ENCODE measurements at regions of chr9 and their contacts with region 1.

Region 1: GRCh38 chr9:84397151-84397728 is 56.7 kb upstream of the SLC28A3 start:
- DNase-seq: peak; percentile 58
- ATAC-seq: peak; percentile 95
- H3K4me3 ChIP-seq: no peak overlapping the region
- H3K27ac ChIP-seq: no peak overlapping the region
- H3K4me1 ChIP-seq: no peaks in the 10 kb centered on the region
- H3K27me3 ChIP-seq: 0 out of 2 replicates have a peak, but pooled peaks cover 4% of the 10 kb centered on the region
- CTCF ChIP-seq: peak; percentile 66 to 86 (median 85); a peak in 5 of 6 replicates
- POLR2A ChIP-seq: no peak
- RAD21 ChIP-seq: peak; percentile 89

Region 2: GRCh38 chr9:83937911-83938323 is 459.3 kb before region 1 on chr9:
- CTCF ChIA-PET with region 1: interaction called, 7 read pairs
- POLR2A ChIA-PET with region 1: no interaction called
- RAD21 ChIA-PET with region 1: no interaction called
- intact Hi-C with region 1: loop called (anchors 10 kb)
- DNase-seq: peak; percentile 62
- ATAC-seq: peak; percentile 89
- H3K4me3 ChIP-seq: no peak overlapping the region
- H3K27ac ChIP-seq: no peak overlapping the region
- H3K4me1 ChIP-seq: peaks cover 7 to 13% of the 10 kb centered on the region in 2 experiments; a peak in 3 of 4 replicates
- H3K27me3 ChIP-seq: no peaks in the 10 kb centered on the region
- CTCF ChIP-seq: peak; percentile 44 to 90 (median 78); a peak in 5 of 6 replicates
- POLR2A ChIP-seq: no peak
- RAD21 ChIP-seq: peak; percentile 94

Region 3: DNA sequence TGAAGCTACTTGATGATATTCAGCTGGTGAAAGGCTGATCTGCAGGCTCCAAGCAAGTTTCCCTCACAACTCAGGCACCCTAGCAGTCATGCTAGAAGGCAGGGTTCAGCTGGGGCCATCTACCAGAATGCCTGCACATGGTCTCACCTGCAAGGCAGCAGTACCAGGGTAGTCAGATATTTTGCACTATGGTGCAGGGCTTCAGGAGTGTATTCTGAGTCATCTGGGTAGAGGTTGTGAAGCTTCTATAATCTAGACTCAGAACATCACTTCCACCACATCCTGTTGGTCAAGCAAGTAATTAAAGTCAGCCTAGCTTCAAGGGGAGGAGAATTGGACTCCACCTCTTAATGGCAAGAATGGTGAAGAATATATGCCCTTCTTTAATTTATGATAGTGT is 103.0 kb after region 1 on chr9:
- CTCF ChIA-PET with region 1: no interaction called
- POLR2A ChIA-PET with region 1: no interaction called
- RAD21 ChIA-PET with region 1: no interaction called
- intact Hi-C with region 1: no loop called
- DNase-seq: no peak
- ATAC-seq: no peak
- H3K4me3 ChIP-seq: no peak overlapping the region
- H3K27ac ChIP-seq: no peak overlapping the region
- H3K4me1 ChIP-seq: no peaks in the 10 kb centered on the region
- H3K27me3 ChIP-seq: no peaks in the 10 kb centered on the region
- CTCF ChIP-seq: no peak
- POLR2A ChIP-seq: no peak
- RAD21 ChIP-seq: no peak

Region 4: DNA sequence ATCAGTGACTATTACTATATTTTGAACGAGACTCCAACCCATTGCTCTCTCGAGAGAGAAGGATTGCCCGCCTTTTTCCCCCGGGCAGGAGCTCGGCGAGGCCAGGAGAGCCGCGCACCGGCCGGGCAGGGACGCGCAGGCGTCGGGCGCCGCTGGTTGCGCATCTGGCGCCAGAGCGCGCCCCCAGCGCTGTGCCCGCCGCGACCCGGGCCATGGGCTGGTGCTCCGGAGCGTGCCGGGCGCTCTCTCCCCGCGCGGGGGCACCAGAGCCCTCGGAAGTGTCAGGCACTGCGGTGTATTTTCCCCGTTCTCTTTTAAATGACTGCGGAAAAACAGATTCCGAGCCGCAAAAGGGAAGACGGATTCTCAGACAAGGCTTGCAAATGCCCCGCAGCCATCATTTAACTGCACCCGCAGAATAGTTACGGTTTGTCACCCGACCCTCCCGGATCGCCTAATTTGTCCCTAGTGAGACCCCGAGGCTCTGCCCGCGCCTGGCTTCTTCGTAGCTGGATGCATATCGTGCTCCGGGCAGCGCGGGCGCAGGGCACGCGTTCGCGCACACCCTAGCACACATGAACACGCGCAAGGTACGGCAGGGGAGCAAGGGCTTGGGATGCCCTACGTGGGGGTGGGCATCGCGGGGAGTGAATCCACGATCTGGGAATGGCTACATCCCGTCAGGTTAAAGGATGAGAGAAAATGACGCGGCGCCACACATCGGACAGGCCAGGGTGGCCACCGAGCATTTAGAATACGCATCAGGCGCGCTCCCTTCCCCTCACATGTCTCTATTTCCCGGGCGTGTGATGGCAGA is 271.2 kb after region 1 on chr9:
- CTCF ChIA-PET with region 1: interaction called, 3 read pairs
- POLR2A ChIA-PET with region 1: no interaction called
- RAD21 ChIA-PET with region 1: no interaction called
- intact Hi-C with region 1: loop called (anchors 2 kb)
- DNase-seq: peak; percentile 10
- ATAC-seq: peak; percentile 97
- H3K4me3 ChIP-seq: peak overlapping the region; percentile 4 to 18; a peak in 1 of 4 replicates
- H3K27ac ChIP-seq: no peak overlapping the region
- H3K4me1 ChIP-seq: peaks cover 0 to 4% of the 10 kb centered on the region in 2 experiments; a peak in 1 of 4 replicates
- H3K27me3 ChIP-seq: peaks cover 4% of the 10 kb centered on the region; the same call in 1 of the 2 replicates
- CTCF ChIP-seq: peak; percentile 33 to 57 (median 53); a peak in 5 of 6 replicates
- POLR2A ChIP-seq: no peak
- RAD21 ChIP-seq: peak; percentile 59

Region 5: DNA sequence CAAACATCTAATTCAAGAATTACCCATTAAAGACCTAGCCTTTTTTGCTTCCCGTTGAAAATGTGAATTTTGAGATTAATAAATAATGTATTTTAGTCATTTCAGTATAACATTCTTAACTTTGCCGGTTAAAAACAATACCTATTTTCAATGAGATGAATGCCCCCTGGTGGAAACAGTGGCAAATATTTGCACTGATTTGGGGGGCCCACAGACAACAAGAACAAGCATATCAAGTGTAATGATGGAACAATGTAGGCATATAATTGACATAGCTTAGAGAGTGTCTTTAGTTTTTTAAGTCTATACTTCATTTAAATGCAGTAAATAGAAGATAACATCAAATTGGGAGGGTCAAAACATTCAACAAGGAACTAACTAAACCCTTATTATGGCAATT is 384.2 kb after region 1 on chr9:
- CTCF ChIA-PET with region 1: interaction called, 12 read pairs
- POLR2A ChIA-PET with region 1: no interaction called
- RAD21 ChIA-PET with region 1: no interaction called
- intact Hi-C with region 1: loop called (anchors 2 kb)
- DNase-seq: no peak
- ATAC-seq: no peak
- H3K4me3 ChIP-seq: no peak overlapping the region
- H3K27ac ChIP-seq: no peak overlapping the region
- H3K4me1 ChIP-seq: no peaks in the 10 kb centered on the region
- H3K27me3 ChIP-seq: peaks cover 16% of the 10 kb centered on the region
- CTCF ChIP-seq: peak; percentile 36 to 59 (median 44); a peak in 5 of 6 replicates
- POLR2A ChIP-seq: no peak
- RAD21 ChIP-seq: peak; percentile 45

Region 6: GRCh38 chr9:85142968-85143367 is 745.7 kb after region 1 on chr9:
- CTCF ChIA-PET with region 1: interaction called, 3 read pairs
- POLR2A ChIA-PET with region 1: no interaction called
- RAD21 ChIA-PET with region 1: no interaction called
- intact Hi-C with region 1: loop called (anchors 5 kb)
- DNase-seq: peak; percentile 4
- ATAC-seq: peak; percentile 83
- H3K4me3 ChIP-seq: no peak overlapping the region
- H3K27ac ChIP-seq: no peak overlapping the region
- H3K4me1 ChIP-seq: no peaks in the 10 kb centered on the region
- H3K27me3 ChIP-seq: peaks cover 15% of the 10 kb centered on the region
- CTCF ChIP-seq: peak; percentile 35 to 66 (median 61); a peak in 5 of 6 replicates
- POLR2A ChIP-seq: no peak
- RAD21 ChIP-seq: peak; percentile 53

Region 7: GRCh38 chr9:85425153-85425611 is 1027.9 kb after region 1 on chr9:
- CTCF ChIA-PET with region 1: interaction called, 10 read pairs
- POLR2A ChIA-PET with region 1: no interaction called
- RAD21 ChIA-PET with region 1: interaction called in 1 of 2 experiments, 3 read pairs
- intact Hi-C with region 1: loop called (anchors 1 kb)
- DNase-seq: peak; percentile 69
- ATAC-seq: peak; percentile 97
- H3K4me3 ChIP-seq: no peak overlapping the region
- H3K27ac ChIP-seq: no peak overlapping the region
- H3K4me1 ChIP-seq: no peaks in the 10 kb centered on the region
- H3K27me3 ChIP-seq: peaks cover 15% of the 10 kb centered on the region
- CTCF ChIP-seq: peak; percentile 79 to 86 (median 83)
- POLR2A ChIP-seq: no peak
- RAD21 ChIP-seq: peak; percentile 83